ENCODE measurements at regions of chr12 and their contacts with region 1.

Region 1: DNA sequence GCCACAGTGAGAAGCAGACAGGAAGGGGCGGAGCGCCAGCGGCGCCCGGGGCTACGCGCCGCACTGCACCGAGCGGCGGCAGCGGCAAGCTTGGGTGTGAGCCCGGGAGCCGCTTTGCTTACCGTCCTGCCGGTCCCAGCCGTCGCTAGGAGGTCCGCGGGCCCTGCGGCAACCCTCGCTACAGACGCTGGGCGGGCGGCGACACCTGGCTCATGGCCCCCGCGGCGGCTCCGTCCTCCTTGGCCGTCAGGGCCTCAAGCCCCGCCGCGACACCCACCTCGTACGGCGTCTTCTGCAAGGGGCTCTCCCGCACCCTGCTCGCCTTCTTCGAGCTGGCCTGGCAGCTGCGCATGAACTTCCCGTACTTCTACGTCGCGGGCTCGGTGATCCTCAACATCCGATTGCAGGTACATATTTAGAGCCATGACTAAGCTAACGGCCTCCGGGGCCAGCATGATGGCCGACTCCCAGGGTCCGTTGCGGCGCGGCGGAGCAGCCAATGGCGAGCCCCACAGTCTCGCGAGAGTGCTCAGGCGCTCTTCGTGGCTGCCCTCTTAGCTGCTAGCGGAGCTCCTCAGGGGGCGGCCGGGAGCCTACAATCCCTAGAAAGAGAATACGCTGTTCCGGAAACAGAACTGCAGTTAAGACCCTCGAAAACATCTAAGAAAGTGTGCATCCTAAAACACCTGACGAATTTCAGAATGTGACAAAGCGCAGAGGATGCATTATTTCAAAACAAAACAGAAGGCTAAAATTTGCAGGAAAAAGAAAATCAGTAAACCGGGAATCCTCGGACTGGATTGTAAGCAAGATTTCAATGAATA is at the start of gene SMIM10L1:
- DNase-seq: peak; percentile 80 to 93 (median 82)
- ATAC-seq: peak; percentile 97
- H3K4me3 ChIP-seq: peak within 1 kb of the TSS; percentile 50
- H3K27ac ChIP-seq: peak within 1 kb of the TSS; percentile 99
- H3K4me1 ChIP-seq: peaks cover 6 to 14% of the 10 kb centered on the region in 2 experiments; a peak in 4 of 5 replicates
- H3K27me3 ChIP-seq: no peaks in the 10 kb centered on the region
- CTCF ChIP-seq: peak in 1 of 3 experiments; percentile 14; a peak in 2 of 6 replicates
- EP300 ChIP-seq: peak; percentile 17; the same call in 1 of the 2 replicates
- POLR2A ChIP-seq: peak; percentile 91
- RAD21 ChIP-seq: no peak
- polyA plus RNA-seq, gene SMIM10L1: 3.0 TPM

Region 2: GRCh38 chr12:11158885-11159444 is 12.4 kb before region 1 on chr12:
- CTCF ChIA-PET with region 1: no interaction called
- POLR2A ChIA-PET with region 1: interaction called, 13 read pairs
- in situ Hi-C with region 1: no loop called
- intact Hi-C with region 1: no loop called
- DNase-seq: peak in 2 of 4 experiments; percentile 11 to 13
- ATAC-seq: peak; percentile 61
- H3K4me3 ChIP-seq: no peak overlapping the region
- H3K27ac ChIP-seq: peak overlapping the region; percentile 58; the same call in 2 of the 3 replicates
- H3K4me1 ChIP-seq: peaks cover 0 to 5% of the 10 kb centered on the region in 2 experiments; a peak in 2 of 5 replicates
- H3K27me3 ChIP-seq: no peaks in the 10 kb centered on the region
- CTCF ChIP-seq: no peak
- EP300 ChIP-seq: no peak
- POLR2A ChIP-seq: no peak
- RAD21 ChIP-seq: no peak